ENCODE measurements at regions of chr17 and their contacts with region 1.

Region 1: GRCh38 chr17:32755045-32755805 is 121.7 kb downstream of the MYO1D start:
- DNase-seq: peak; percentile 68
- ATAC-seq: peak; percentile 71
- H3K4me3 ChIP-seq: no peak overlapping the region
- H3K27ac ChIP-seq: no peak overlapping the region
- H3K4me1 ChIP-seq: no peaks in the 10 kb centered on the region
- H3K27me3 ChIP-seq: no peaks in the 10 kb centered on the region
- CTCF ChIP-seq: peak; percentile 66

Region 2: GRCh38 chr17:32486111-32486700 is 269.0 kb before region 1 on chr17:
- CTCF ChIA-PET with region 1: no interaction called
- POLR2A ChIA-PET with region 1: no interaction called
- intact Hi-C with region 1: loop called (anchors 5 kb)
- DNase-seq: peak; percentile 73
- ATAC-seq: peak; percentile 74
- H3K4me3 ChIP-seq: peak overlapping the region; percentile 50; the same call in 1 of the 2 replicates
- H3K27ac ChIP-seq: no peak overlapping the region
- H3K4me1 ChIP-seq: peaks cover 4% of the 10 kb centered on the region; the same call in 1 of the 2 replicates
- H3K27me3 ChIP-seq: no peaks in the 10 kb centered on the region
- CTCF ChIP-seq: no peak

Region 3: DNA sequence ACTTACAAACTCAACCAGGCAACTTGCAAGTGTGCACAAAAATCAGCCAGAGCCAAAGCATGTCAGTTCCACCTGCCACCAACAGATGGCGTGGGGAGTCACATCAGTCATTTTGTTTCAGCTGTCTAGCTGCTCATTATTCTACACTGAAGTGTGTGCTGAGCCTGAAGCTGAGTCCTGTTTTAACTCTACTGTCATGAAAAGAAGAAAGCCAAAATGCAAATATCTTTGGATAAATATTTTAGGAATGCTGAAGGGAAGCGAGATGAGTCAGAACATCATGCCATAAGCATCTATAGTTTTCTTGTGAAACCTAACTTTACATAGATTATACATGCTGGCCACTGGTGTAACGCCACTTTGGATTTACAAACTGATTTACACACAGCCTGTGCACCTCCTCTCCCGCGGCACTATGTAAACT is 95.8 kb before region 1 on chr17:
- CTCF ChIA-PET with region 1: interaction called, 3 read pairs
- POLR2A ChIA-PET with region 1: no interaction called
- intact Hi-C with region 1: loop called (anchors 1 kb)
- DNase-seq: peak; percentile 70
- ATAC-seq: peak; percentile 82
- H3K4me3 ChIP-seq: no peak overlapping the region
- H3K27ac ChIP-seq: no peak overlapping the region
- H3K4me1 ChIP-seq: no peaks in the 10 kb centered on the region
- H3K27me3 ChIP-seq: no peaks in the 10 kb centered on the region
- CTCF ChIP-seq: peak; percentile 79

Region 4: DNA sequence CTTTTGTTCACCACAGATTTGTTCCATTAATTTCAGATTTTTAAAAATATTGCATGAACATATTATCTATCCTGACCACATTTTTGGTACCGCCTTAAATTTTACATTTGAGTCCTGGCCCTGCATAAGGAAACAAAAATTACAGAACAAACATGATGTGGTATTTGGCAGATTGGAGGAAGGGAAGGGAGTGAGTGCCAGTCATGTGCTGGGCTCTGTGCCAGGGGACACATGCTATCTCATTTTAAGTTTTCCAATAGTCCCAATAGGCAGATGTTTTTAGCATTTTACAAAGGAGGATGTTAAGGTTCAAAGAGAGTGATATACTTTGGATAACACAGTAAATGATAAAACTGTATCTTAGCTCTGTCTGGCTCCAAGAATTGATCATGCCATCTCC is 83.3 kb before region 1 on chr17:
- CTCF ChIA-PET with region 1: no interaction called
- POLR2A ChIA-PET with region 1: no interaction called
- intact Hi-C with region 1: loop called (anchors 1 kb)
- DNase-seq: peak; percentile 9
- ATAC-seq: no peak
- H3K4me3 ChIP-seq: no peak overlapping the region
- H3K27ac ChIP-seq: no peak overlapping the region
- H3K4me1 ChIP-seq: no peaks in the 10 kb centered on the region
- H3K27me3 ChIP-seq: no peaks in the 10 kb centered on the region
- CTCF ChIP-seq: no peak

Region 5: GRCh38 chr17:32769839-32770238 is 14.6 kb after region 1 on chr17:
- CTCF ChIA-PET with region 1: no interaction called
- POLR2A ChIA-PET with region 1: no interaction called
- intact Hi-C with region 1: no loop called
- DNase-seq: peak; percentile 20
- ATAC-seq: no peak
- H3K4me3 ChIP-seq: no peak overlapping the region
- H3K27ac ChIP-seq: no peak overlapping the region
- H3K4me1 ChIP-seq: peaks cover 16% of the 10 kb centered on the region
- H3K27me3 ChIP-seq: no peaks in the 10 kb centered on the region
- CTCF ChIP-seq: peak; percentile 44